Cardiac septum (tissue), 1 donor: ENCODE measurements at regions of chr16 and their contacts with region 1.

Region 1: GRCh38 chr16:3003582-3004302 is 9.0 kb upstream of the CLDN9 start:
- DNase-seq: peak; percentile 99

Region 2: GRCh38 chr16:3021449-3022207 is 17.9 kb after region 1 on chr16:
- intact Hi-C with region 1: loop called (anchors 2 kb)
- DNase-seq: peak; percentile 94

Region 3: DNA sequence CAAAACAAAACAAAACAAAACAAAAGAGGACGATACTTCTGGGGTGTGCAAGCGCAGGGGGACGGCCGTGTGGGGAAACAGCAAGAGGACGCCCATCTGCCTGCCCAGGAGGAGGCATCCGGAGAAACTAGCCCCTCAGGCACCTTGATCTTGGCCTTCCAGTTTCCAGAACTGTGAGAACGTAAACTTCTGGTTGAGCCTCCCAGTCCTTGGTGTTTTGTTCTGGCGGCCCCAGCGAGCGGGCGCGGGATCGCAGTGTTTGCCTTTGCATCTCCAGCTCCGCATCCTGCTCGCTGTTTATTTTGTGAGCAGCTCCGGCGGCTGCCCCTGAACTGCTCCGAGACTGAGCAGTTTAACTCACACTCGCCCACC is 41.6 kb after region 1 on chr16:
- intact Hi-C with region 1: no loop called
- DNase-seq: no peak